ENCODE measurements at regions of chr5 and their contacts with region 1.

Region 1: GRCh38 chr5:77030097-77031071 is at the start of gene AGGF1:
- DNase-seq: peak; percentile 97
- ATAC-seq: peak; percentile 97
- H3K4me3 ChIP-seq: peak within 1 kb of the TSS; percentile 61 to 93
- H3K27ac ChIP-seq: peak within 1 kb of the TSS; percentile 58 to 79
- H3K4me1 ChIP-seq: peaks cover 0 to 2% of the 10 kb centered on the region in 2 donors
- H3K27me3 ChIP-seq: no peaks in the 10 kb centered on the region
- total RNA-seq, gene AGGF1: 14.5 to 20.6 TPM

Region 2: DNA sequence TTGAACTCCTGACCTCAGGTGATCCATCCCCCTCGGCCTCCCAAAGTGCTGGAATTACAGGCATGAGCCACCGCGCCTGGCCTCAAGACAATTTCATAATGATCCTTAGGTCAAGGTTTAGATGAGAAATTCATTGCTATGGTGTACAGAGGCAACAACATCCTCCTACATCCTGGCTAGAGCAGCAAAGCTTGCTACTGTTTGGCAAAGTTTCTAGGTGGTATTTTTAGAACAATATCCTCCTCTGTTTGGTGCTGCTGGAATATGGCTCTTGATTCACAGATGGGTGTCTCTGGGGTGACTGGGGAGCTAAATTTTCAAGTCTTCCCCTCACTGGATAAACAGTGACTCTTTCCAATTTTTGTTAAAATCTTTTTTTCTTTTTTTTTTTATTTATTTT is 46.9 kb before region 1 on chr5:
- intact Hi-C with region 1: no loop called
- DNase-seq: no peak
- ATAC-seq: no peak
- H3K4me3 ChIP-seq: no peak overlapping the region
- H3K27ac ChIP-seq: no peak overlapping the region
- H3K4me1 ChIP-seq: no peaks in the 10 kb centered on the region
- H3K27me3 ChIP-seq: no peaks in the 10 kb centered on the region

Region 3: GRCh38 chr5:77086689-77087483 is 56.5 kb after region 1 on chr5 and contains the start of gene ZBED3:
- intact Hi-C with region 1: loop called in 1 of 2 experiments (anchors 5 kb)
- DNase-seq: peak; percentile 84 to 87
- ATAC-seq: peak; percentile 85
- H3K4me3 ChIP-seq: peak within 1 kb of the TSS; percentile 81 to 85
- H3K27ac ChIP-seq: peak within 1 kb of the TSS; percentile 87 to 96
- H3K4me1 ChIP-seq: no peaks in the 10 kb centered on the region
- H3K27me3 ChIP-seq: no peaks in the 10 kb centered on the region
- total RNA-seq, gene ZBED3: 11.3 to 11.7 TPM

Region 4: DNA sequence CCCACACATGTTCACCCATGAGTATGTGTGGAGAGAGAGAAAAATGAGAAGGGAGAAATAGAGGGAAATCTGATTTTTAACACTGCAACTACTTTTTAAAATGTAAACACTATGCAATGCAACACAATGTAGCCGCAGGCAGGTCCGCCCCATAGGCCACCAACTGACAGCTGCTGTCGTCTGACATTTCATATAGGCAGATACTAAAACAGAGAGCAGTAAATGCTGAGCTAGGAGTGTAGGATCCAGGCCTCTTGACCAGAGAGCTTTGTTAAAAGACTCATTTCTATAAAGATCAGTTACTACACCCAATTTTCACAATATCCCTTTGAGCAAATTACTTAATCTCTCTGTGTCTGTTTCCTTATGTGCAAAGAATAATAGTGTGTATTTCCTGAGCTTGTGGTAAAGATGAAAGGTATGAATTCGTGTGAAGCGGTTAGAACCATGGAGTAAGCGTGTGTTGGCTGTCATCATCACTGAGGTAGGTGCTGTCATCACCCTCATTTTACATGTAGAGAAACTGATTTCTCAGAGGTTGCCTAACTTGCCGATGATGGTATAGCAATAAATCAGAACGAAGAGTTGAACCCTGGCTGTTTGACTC is 124.9 kb after region 1 on chr5:
- intact Hi-C with region 1: no loop called
- DNase-seq: no peak
- ATAC-seq: no peak
- H3K4me3 ChIP-seq: no peak overlapping the region
- H3K27ac ChIP-seq: no peak overlapping the region
- H3K4me1 ChIP-seq: no peaks in the 10 kb centered on the region
- H3K27me3 ChIP-seq: no peaks in the 10 kb centered on the region